ENCODE measurements at regions of chr2 and their contacts with region 1.

Region 1: DNA sequence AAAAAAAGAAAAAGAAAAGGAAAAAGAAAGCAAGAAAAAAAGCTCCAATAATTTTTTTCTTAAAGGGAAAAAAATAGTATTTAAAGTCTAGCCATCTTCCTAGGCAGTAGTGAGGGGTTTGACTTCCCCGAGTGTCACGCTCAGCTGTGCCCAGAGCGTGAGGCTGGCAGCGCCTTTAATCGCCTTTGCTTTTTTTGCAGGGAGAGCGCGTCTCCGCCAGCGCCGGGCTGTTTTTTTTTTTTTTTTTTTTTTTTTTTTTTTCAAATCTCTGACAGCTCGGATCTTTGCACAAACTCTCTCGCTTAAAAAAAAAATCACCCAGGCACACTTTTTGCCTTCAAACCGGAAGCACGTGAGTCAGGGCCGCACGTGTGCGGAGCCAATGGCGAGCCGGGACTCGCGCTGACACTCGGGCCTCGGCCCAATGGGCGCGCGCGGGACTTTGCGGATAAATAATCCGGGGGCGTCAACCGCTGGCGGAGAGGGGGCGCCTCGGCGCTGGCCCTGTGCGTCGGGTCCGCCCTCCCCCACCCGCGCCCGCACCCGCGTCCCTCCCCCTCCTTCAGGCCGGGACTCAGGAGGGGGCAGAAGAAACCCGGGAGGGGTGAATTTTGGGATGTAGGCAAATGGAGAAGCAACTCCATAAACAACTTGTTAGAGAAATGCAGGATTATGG is at the start of gene EN1:
- DNase-seq: no peak
- ATAC-seq: peak; percentile 41
- H3K4me3 ChIP-seq: no peak within 1 kb of the TSS
- H3K4me1 ChIP-seq: peaks cover 18% of the 10 kb centered on the region
- CTCF ChIP-seq: no peak
- total RNA-seq, gene EN1: not detected

Region 2: DNA sequence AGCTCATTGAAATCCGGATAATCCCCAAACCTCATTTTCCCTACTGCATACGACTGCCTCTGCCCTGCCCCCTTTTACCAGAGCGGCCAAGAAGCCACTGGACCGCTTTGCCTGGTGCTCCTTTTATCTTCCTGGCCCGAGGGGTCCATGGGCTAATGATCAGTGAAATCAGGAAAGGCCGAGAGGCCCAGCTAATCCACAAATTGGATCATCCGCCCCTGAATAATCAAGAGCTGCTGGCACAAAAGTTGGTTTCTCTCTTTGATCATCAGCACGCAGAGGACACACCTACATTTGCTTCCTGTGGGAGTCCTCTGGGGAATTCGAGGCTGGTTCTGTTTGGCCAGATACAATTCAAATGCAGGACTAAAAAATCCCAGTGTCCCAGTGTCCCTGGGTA is 614.8 kb before region 1 on chr2:
- intact Hi-C with region 1: loop called in 1 of 2 experiments (anchors 5 kb)
- DNase-seq: no peak
- ATAC-seq: no peak
- H3K4me3 ChIP-seq: no peak overlapping the region
- H3K4me1 ChIP-seq: no peaks in the 10 kb centered on the region
- CTCF ChIP-seq: no peak

Region 3: DNA sequence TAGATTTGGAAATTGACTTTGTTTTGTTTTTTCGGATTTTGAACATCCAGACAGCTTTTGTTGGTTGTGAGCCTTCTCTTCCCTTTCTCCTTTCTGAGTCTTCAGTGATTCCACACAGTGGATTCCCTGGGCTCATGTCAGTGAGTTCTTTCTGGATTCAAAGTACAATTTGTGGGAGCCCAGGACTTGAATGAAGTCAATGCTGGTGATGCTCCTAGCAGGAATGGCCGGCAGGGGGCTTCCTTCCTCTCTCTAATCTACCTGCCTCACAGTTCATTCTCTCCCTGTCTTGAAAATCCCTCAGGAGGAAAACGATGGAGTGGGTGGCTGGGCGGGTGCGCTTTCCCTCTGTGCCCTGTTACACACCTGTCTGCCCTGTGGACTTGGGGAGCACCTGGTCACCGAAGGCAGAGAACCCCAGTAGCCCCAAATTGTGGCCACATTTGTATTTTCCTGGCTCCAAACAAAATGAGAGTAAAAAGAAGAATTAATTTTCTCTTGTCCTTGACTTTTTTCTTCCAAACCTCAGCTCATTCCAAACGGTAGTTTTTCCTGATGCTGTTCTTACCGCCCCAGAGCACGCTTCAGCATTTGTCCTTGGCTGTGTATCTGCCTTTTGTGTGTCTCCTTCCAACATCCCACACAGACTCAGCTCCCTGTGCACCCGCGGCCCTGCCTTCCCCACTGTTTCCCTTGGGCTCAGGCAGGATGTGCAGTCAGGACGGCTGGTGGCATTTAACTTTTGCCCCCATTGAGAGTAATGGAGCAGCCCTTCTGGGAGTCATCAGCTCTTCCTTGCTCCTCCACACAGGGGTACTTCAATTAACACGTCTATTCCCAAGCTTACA is 180.9 kb after region 1 on chr2:
- intact Hi-C with region 1: no loop called
- DNase-seq: peak in 2 of 3 donors; percentile 50 to 62
- ATAC-seq: peak; percentile 33
- H3K4me3 ChIP-seq: no peak overlapping the region
- H3K4me1 ChIP-seq: no peaks in the 10 kb centered on the region
- CTCF ChIP-seq: no peak

Region 4: DNA sequence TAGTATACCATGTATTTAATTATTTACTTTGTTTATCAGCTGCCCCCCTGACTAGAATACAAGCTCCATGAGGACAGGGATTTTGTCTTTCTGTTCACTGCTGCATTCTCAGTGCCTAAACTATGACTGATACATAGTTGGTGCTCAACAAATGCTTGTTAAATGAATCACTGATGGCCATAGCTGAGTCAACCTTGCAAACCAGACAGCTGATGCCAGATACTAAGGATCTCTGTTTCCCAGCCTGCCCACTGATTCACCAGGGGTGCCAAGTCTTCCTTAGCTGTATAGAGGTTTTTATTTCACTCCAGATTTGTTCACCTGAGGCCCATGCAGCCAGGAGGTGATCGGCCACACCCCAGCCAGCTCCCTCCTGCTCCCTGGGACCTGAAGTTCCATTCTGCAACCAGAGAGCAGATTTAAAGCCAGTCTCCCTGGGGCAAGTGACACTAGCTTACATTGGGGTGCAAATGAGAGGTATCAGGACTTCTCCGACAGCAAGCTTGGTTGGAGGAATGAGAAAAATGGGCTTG is 218.7 kb after region 1 on chr2:
- intact Hi-C with region 1: no loop called
- DNase-seq: no peak
- ATAC-seq: no peak
- H3K4me3 ChIP-seq: no peak overlapping the region
- H3K4me1 ChIP-seq: no peaks in the 10 kb centered on the region
- CTCF ChIP-seq: no peak

Region 5: GRCh38 chr2:119366649-119367471 is 519.2 kb after region 1 on chr2 and contains the starts of genes C2orf76 and DBI:
- intact Hi-C with region 1: no loop called
- DNase-seq: peak; percentile 95 to 98 (median 98)
- ATAC-seq: peak; percentile 96
- H3K4me3 ChIP-seq: peak within 1 kb of the TSS; percentile 70
- H3K4me1 ChIP-seq: peaks cover 28% of the 10 kb centered on the region
- CTCF ChIP-seq: no peak
- total RNA-seq, gene C2orf76: 5.4 to 11.2 (median 5.5) TPM
- total RNA-seq, gene DBI: 109 to 235 (median 221) TPM

Region 6: GRCh38 chr2:119414894-119415293 is 567.3 kb after region 1 on chr2:
- intact Hi-C with region 1: no loop called
- DNase-seq: no peak
- ATAC-seq: no peak
- H3K4me3 ChIP-seq: no peak overlapping the region
- H3K4me1 ChIP-seq: no peaks in the 10 kb centered on the region
- CTCF ChIP-seq: no peak